Esophagus muscularis mucosa (tissue), 4 donors: ENCODE measurements at regions of chr12 and their contacts with region 1.

Region 1: GRCh38 chr12:106739815-106740530 is 34.5 kb upstream of the RIC8B start:
- DNase-seq: no peak
- H3K4me3 ChIP-seq: no peak overlapping the region
- H3K27ac ChIP-seq: no peak overlapping the region
- H3K4me1 ChIP-seq: no peaks in the 10 kb centered on the region
- H3K27me3 ChIP-seq: peaks cover 0 to 6% (median 0%) of the 10 kb centered on the region in 4 donors
- CTCF ChIP-seq: no peak
- EP300 ChIP-seq: no peak
- POLR2A ChIP-seq: no peak

Region 2: GRCh38 chr12:106774005-106774807 is 34.2 kb after region 1 on chr12 and contains the start of gene RIC8B:
- intact Hi-C with region 1: no loop called
- DNase-seq: peak; percentile 98
- H3K4me3 ChIP-seq: peak within 1 kb of the TSS; percentile 80 to 95 (median 88)
- H3K27ac ChIP-seq: peak within 1 kb of the TSS; percentile 91 to 97 (median 93)
- H3K4me1 ChIP-seq: peaks cover 14 to 21% (median 18%) of the 10 kb centered on the region in 4 donors
- H3K27me3 ChIP-seq: peaks cover 0 to 2% (median 0%) of the 10 kb centered on the region in 4 donors
- CTCF ChIP-seq: peak in 1 of 3 experiments; percentile 34
- EP300 ChIP-seq: no peak
- POLR2A ChIP-seq: peak; percentile 54
- total RNA-seq, gene RIC8B: 13.8 to 19.1 (median 15.3) TPM

Region 3: DNA sequence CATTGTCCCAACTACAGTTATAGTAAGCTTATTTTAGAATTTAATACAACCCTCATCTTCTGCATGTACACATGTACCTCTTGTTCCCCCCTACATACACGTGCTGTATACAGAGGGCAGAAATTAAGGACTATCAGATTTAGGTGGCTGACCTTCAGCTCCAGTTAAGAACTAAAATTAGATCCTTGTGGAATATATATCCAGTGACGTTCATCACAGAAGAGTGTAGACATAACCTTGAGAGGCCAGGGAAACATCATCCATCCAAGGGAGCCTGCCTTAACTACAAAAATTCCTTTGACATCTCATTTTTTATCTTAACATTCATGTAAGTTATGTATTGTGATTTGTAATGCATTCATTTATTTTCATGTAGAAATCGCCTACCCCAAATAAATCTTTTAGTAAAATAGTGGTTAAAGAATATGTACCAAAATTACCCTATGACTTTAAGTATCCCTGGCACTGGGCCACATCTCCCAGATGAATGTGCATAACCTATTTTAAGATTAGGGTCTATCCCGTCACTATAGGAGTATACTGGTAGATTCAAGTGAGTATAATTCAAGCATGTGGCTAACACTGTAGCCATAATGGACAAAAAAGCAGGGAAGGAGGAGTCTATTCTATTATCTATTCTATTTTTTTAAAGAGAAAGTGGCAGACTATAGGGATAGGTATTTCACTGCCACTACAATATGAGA is 62.0 kb after region 1 on chr12:
- intact Hi-C with region 1: loop called (anchors 5 kb)
- DNase-seq: no peak
- H3K4me3 ChIP-seq: no peak overlapping the region
- H3K27ac ChIP-seq: no peak overlapping the region
- H3K4me1 ChIP-seq: peaks cover 0 to 4% (median 0%) of the 10 kb centered on the region in 4 donors
- H3K27me3 ChIP-seq: no peaks in the 10 kb centered on the region
- CTCF ChIP-seq: no peak
- EP300 ChIP-seq: no peak
- POLR2A ChIP-seq: no peak

Region 4: GRCh38 chr12:106840243-106840642 is 100.3 kb after region 1 on chr12:
- intact Hi-C with region 1: no loop called
- DNase-seq: no peak
- H3K4me3 ChIP-seq: no peak overlapping the region
- H3K27ac ChIP-seq: peak overlapping the region in 1 of 4 donors; percentile 50
- H3K4me1 ChIP-seq: peaks cover 29 to 33% (median 31%) of the 10 kb centered on the region in 4 donors
- H3K27me3 ChIP-seq: no peaks in the 10 kb centered on the region
- CTCF ChIP-seq: no peak
- EP300 ChIP-seq: no peak
- POLR2A ChIP-seq: no peak

Region 5: DNA sequence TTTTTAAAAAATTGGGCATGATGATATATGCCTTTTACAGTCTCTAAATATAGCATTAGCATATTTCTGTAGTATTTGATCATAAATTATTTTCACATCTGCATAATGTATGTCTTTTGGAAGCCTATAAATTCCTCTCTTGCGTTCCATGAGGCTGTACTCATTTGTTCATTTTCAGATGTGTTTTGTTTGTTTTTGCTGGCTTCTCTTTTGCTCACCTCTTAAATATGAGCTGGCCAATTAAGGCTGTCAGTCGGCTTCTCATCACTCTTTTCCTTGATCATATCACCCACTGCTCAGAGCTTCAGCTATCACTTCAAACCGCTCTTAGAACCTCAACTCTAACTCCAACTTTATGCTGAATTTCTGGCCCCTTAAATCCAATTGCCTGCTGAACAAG is 222.3 kb after region 1 on chr12:
- intact Hi-C with region 1: no loop called
- DNase-seq: no peak
- H3K4me3 ChIP-seq: no peak overlapping the region
- H3K27ac ChIP-seq: no peak overlapping the region
- H3K4me1 ChIP-seq: peaks cover 22 to 66% (median 44%) of the 10 kb centered on the region in 4 donors
- H3K27me3 ChIP-seq: no peaks in the 10 kb centered on the region
- CTCF ChIP-seq: no peak
- EP300 ChIP-seq: no peak
- POLR2A ChIP-seq: no peak